Transverse colon (tissue), 4 donors: ENCODE measurements at regions of chr2 and their contacts with region 1.

Region 1: GRCh38 chr2:35410431-35411061 is 945.0 kb upstream of the CRIM1 start:
- DNase-seq: peak; percentile 42
- H3K4me3 ChIP-seq: no peak overlapping the region
- H3K27ac ChIP-seq: no peak overlapping the region
- H3K4me1 ChIP-seq: no peaks in the 10 kb centered on the region
- H3K27me3 ChIP-seq: no peaks in the 10 kb centered on the region
- CTCF ChIP-seq: peak; percentile 64 to 88 (median 79)
- EP300 ChIP-seq: no peak
- POLR2A ChIP-seq: no peak

Region 2: GRCh38 chr2:34096562-34097171 is 1313.9 kb before region 1 on chr2:
- in situ Hi-C with region 1: loop called in 2 of 4 experiments (anchors 25 kb)
- intact Hi-C with region 1: no loop called
- DNase-seq: peak; percentile 57
- H3K4me3 ChIP-seq: no peak overlapping the region
- H3K27ac ChIP-seq: no peak overlapping the region
- H3K4me1 ChIP-seq: no peaks in the 10 kb centered on the region
- H3K27me3 ChIP-seq: no peaks in the 10 kb centered on the region
- CTCF ChIP-seq: peak; percentile 59 to 76 (median 71)
- EP300 ChIP-seq: no peak
- POLR2A ChIP-seq: no peak